Activated CD8-positive, alpha-beta T cell treated with anti-CD3 and anti-CD28 coated beads for 36 hours (primary cell): ENCODE measurements at regions of chr15 and their contacts with region 1.

Region 1: GRCh38 chr15:83011271-83012075 is at the start of gene C15orf40:
- DNase-seq: peak; percentile 88
- ATAC-seq: peak; percentile 82
- H3K4me3 Mint-ChIP-seq: peak within 1 kb of the TSS; percentile 94
- H3K27ac Mint-ChIP-seq: peak within 1 kb of the TSS; percentile 90
- H3K4me1 Mint-ChIP-seq: peaks cover 49% of the 10 kb centered on the region
- H3K27me3 Mint-ChIP-seq: no peaks in the 10 kb centered on the region
- CTCF ChIP-seq: no peak
- total RNA-seq, gene C15orf40: 25.6 to 30.2 TPM

Region 2: GRCh38 chr15:82530606-82531379 is 480.7 kb before region 1 on chr15:
- CTCF ChIA-PET with region 1: interaction called, 3 read pairs
- POLR2A ChIA-PET with region 1: interaction called, 4 read pairs
- intact Hi-C with region 1: loop called (anchors 10 kb)
- DNase-seq: peak; percentile 86
- ATAC-seq: peak; percentile 92
- H3K4me3 Mint-ChIP-seq: peak overlapping the region; percentile 40
- H3K27ac Mint-ChIP-seq: peak overlapping the region; percentile 63
- H3K4me1 Mint-ChIP-seq: peaks cover 15% of the 10 kb centered on the region
- H3K27me3 Mint-ChIP-seq: no peaks in the 10 kb centered on the region
- CTCF ChIP-seq: peak; percentile 76

Region 3: GRCh38 chr15:82985688-82986441 is 25.6 kb before region 1 on chr15 and contains the start of gene RAMAC:
- CTCF ChIA-PET with region 1: interaction called, 15 read pairs
- POLR2A ChIA-PET with region 1: interaction called, 5 read pairs
- intact Hi-C with region 1: no loop called
- DNase-seq: peak; percentile 97
- ATAC-seq: peak; percentile 95
- H3K4me3 Mint-ChIP-seq: peak within 1 kb of the TSS; percentile 96
- H3K27ac Mint-ChIP-seq: peak within 1 kb of the TSS; percentile 96
- H3K4me1 Mint-ChIP-seq: peaks cover 20% of the 10 kb centered on the region
- H3K27me3 Mint-ChIP-seq: no peaks in the 10 kb centered on the region
- CTCF ChIP-seq: no peak
- total RNA-seq, gene RAMAC: 18.2 to 19.7 TPM

Region 4: DNA sequence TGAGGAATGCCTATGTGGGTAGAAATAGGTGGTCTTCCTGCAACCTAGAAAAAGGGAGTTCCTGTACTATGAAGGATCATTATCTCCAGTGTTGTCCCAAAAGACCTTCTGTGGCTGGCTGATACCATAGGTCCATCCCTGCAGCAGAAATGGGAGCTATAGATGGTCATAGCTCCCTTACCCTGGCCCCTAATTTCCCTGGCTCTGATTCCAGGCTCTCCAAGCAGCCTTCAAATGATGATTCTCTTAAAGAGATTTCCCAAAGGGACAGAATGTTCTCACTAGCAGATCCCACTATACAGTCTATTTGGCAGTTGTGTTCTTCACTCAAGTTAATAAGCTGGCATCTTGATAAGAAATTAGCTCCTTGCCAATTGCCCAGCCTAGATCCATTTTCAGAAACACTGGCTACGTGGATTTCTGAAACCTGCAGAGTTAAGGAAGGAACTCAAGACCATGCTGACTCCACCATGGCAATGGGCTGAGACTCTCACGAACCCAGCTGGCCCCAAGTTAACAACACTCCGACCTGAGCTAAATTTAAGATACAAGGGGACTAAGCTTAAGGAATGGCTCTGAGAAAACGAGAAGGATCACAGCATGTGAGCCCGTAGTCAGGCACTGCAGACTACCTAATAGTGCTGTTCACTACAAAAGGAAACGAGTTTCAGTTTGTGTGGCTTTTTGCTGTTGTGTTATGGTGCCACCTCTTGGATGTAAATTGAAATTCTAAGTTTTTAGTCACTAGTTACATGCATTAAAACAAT is 11.4 kb before region 1 on chr15:
- CTCF ChIA-PET with region 1: interaction called, 25 read pairs
- POLR2A ChIA-PET with region 1: interaction called, 3 read pairs
- intact Hi-C with region 1: no loop called
- DNase-seq: peak; percentile 38
- ATAC-seq: peak; percentile 93
- H3K4me3 Mint-ChIP-seq: peak overlapping the region; percentile 53
- H3K27ac Mint-ChIP-seq: peak overlapping the region; percentile 70
- H3K4me1 Mint-ChIP-seq: peaks cover 9% of the 10 kb centered on the region
- H3K27me3 Mint-ChIP-seq: no peaks in the 10 kb centered on the region
- CTCF ChIP-seq: peak; percentile 77

Region 5: GRCh38 chr15:83066734-83067637 is 55.5 kb after region 1 on chr15 and contains the start of gene BTBD1:
- CTCF ChIA-PET with region 1: interaction called, 6 read pairs
- POLR2A ChIA-PET with region 1: interaction called, 8 read pairs
- intact Hi-C with region 1: loop called (anchors 1 kb)
- DNase-seq: peak; percentile 95
- ATAC-seq: peak; percentile 97
- H3K4me3 Mint-ChIP-seq: no peak within 1 kb of the TSS
- H3K27ac Mint-ChIP-seq: peak within 1 kb of the TSS; percentile 88
- H3K4me1 Mint-ChIP-seq: peaks cover 17% of the 10 kb centered on the region
- H3K27me3 Mint-ChIP-seq: no peaks in the 10 kb centered on the region
- CTCF ChIP-seq: no peak
- total RNA-seq, gene BTBD1: 63.3 to 63.8 TPM

Region 6: GRCh38 chr15:83207622-83208411 is 196.3 kb after region 1 on chr15 and contains the start of gene HDGFL3:
- CTCF ChIA-PET with region 1: interaction called, 4 read pairs
- POLR2A ChIA-PET with region 1: no interaction called
- intact Hi-C with region 1: loop called (anchors 5 kb)
- DNase-seq: peak; percentile 76
- ATAC-seq: peak; percentile 82
- H3K4me3 Mint-ChIP-seq: peak within 1 kb of the TSS; percentile 90
- H3K27ac Mint-ChIP-seq: peak within 1 kb of the TSS; percentile 94
- H3K4me1 Mint-ChIP-seq: peaks cover 12% of the 10 kb centered on the region
- H3K27me3 Mint-ChIP-seq: peaks cover 21% of the 10 kb centered on the region
- CTCF ChIP-seq: peak; percentile 28
- total RNA-seq, gene HDGFL3: 31.1 to 32.2 TPM

Region 7: DNA sequence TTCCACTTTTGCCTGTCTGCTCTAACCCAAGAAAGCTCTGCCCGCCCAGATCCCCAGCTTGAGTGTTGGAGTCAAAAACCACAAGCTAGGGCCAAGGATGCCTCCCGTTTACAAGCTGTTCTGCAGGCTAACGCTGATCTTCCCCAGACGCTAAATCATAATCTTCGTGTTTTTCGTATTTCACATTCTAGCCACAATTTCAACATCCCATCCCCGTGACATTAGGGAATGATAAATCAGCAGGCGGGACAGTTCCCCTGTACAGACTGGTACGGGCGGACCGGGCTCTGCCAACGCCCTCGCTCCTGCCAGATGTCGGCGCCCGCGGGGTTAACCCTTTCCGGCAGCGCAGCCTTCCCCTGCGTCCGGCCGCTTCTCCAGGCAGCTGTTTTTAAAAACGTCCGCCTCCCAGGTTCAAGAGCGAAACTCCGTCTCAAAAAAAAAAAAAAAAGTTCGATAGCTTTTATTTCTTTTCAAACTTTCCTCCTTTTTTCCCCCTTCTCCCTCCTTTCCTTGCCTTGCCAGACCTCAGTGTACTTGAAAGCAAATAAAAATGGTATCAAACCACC is 354.0 kb after region 1 on chr15:
- CTCF ChIA-PET with region 1: no interaction called
- POLR2A ChIA-PET with region 1: no interaction called
- intact Hi-C with region 1: no loop called
- DNase-seq: peak; percentile 33
- ATAC-seq: no peak
- H3K4me3 Mint-ChIP-seq: peak overlapping the region; percentile 11
- H3K27ac Mint-ChIP-seq: no peak overlapping the region
- H3K4me1 Mint-ChIP-seq: peaks cover 5% of the 10 kb centered on the region
- H3K27me3 Mint-ChIP-seq: peaks cover 37% of the 10 kb centered on the region
- CTCF ChIP-seq: no peak